ENCODE measurements at regions of chr10 and their contacts with region 1.

Region 1: DNA sequence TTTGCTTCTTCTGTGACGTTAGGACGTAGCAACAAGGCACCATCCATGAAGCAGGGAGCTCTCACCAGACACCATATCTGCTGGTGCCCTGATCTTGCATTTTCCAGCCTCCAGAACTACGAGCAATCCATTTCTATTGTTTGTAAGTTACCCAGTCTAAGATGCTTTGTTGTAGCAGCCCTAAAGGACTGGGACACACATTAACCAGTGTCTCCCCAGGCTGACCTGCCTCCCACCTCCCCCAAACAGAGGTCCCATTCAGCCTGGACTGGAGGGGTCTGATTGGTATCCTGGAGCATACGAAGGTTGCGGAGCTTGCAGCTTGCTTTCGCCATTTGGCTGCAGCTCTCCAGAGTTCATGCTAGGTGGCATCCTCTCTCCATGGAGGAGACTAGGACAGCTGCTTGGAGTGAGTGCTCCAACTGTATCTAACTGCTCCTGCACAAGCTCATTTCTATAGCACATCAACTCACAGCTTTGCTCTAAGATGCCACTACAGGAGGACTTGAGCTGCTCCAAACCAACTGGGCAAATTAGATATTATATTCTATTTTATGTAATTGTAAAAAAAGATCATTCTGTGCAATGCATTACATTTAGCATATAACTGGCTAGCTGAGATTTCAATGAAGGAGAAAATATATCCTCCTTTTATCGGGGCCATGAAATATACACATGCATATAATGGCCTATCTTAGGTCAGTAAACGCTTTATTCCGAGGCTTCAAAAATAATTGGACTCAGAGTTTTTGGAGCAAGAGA is 8.0 kb upstream of the GRK5 start:
- DNase-seq: peak; percentile 53 to 64 (median 60)
- H3K4me3 ChIP-seq: no peak overlapping the region
- H3K4me3 Mint-ChIP-seq: no peak overlapping the region
- H3K27ac ChIP-seq: no peak overlapping the region
- H3K27ac Mint-ChIP-seq: no peak overlapping the region
- H3K4me1 ChIP-seq: peaks cover 8 to 12% of the 10 kb centered on the region in 2 donors
- H3K4me1 Mint-ChIP-seq: peaks cover 21% of the 10 kb centered on the region
- H3K27me3 ChIP-seq: no peaks in the 10 kb centered on the region
- H3K27me3 Mint-ChIP-seq: peaks cover 3 to 5% (median 4%) of the 10 kb centered on the region in 3 donors
- CTCF ChIP-seq: peak; percentile 72

Region 2: GRCh38 chr10:119445311-119445934 is 246.0 kb after region 1 on chr10:
- intact Hi-C with region 1: loop called (anchors 5 to 10 kb)
- DNase-seq: peak; percentile 70 to 78 (median 70)
- H3K4me3 ChIP-seq: no peak overlapping the region
- H3K4me3 Mint-ChIP-seq: no peak overlapping the region
- H3K27ac ChIP-seq: no peak overlapping the region
- H3K27ac Mint-ChIP-seq: no peak overlapping the region
- H3K4me1 ChIP-seq: no peaks in the 10 kb centered on the region
- H3K4me1 Mint-ChIP-seq: peaks cover 2% of the 10 kb centered on the region
- H3K27me3 ChIP-seq: no peaks in the 10 kb centered on the region
- H3K27me3 Mint-ChIP-seq: peaks cover 0 to 3% (median 1%) of the 10 kb centered on the region in 3 donors
- CTCF ChIP-seq: peak; percentile 95

Region 3: DNA sequence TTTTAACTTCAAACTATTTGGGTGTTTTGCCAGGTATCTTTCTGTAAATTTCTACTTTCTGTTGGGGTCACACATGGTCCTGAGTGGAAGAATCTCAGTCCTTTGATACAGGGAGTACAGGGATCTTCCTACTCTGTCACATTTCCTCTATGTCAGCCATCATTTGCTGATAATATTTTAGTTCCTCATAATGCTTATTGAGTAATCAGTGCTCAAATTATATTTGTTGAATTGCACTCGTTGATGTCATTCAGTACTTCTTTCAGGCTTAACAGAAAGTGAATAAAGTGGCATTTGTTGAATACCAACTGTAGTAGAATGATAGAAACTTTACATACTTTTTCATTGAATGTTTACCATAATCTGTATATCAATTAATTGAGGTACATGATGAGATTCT is 1683.7 kb after region 1 on chr10:
- intact Hi-C with region 1: no loop called
- DNase-seq: peak; percentile 12 to 40 (median 34)
- H3K4me3 ChIP-seq: no peak overlapping the region
- H3K4me3 Mint-ChIP-seq: no peak overlapping the region
- H3K27ac ChIP-seq: peak overlapping the region in 1 of 2 donors; percentile 47
- H3K27ac Mint-ChIP-seq: peak overlapping the region in 2 of 7 donors; percentile 7 to 37
- H3K4me1 ChIP-seq: peaks cover 5% of the 10 kb centered on the region in 2 donors
- H3K4me1 Mint-ChIP-seq: peaks cover 9% of the 10 kb centered on the region
- H3K27me3 ChIP-seq: no peaks in the 10 kb centered on the region
- H3K27me3 Mint-ChIP-seq: no peaks in the 10 kb centered on the region
- CTCF ChIP-seq: no peak

Measured in CD14-positive monocyte (primary cell).